Activated naive CD4-positive, alpha-beta T cell treated with anti-CD3 and anti-CD28 coated beads for 36 hours (primary cell): ENCODE measurements at regions of chr5 and their contacts with region 1.

Region 1: GRCh38 chr5:43066799-43067741 is 27.0 kb upstream of the ANXA2R start:
- DNase-seq: peak; percentile 92
- H3K4me3 Mint-ChIP-seq: peak overlapping the region; percentile 98
- H3K27ac Mint-ChIP-seq: peak overlapping the region; percentile 98
- H3K4me1 Mint-ChIP-seq: peaks cover 36% of the 10 kb centered on the region
- H3K27me3 Mint-ChIP-seq: no peaks in the 10 kb centered on the region

Region 2: GRCh38 chr5:42908509-42909488 is 158.3 kb before region 1 on chr5:
- CTCF ChIA-PET with region 1: interaction called, 5 read pairs
- intact Hi-C with region 1: loop called (anchors 1 kb)
- DNase-seq: peak; percentile 94
- H3K4me3 Mint-ChIP-seq: peak overlapping the region; percentile 92
- H3K27ac Mint-ChIP-seq: peak overlapping the region; percentile 75
- H3K4me1 Mint-ChIP-seq: peaks cover 10% of the 10 kb centered on the region
- H3K27me3 Mint-ChIP-seq: peaks cover 10% of the 10 kb centered on the region

Region 3: GRCh38 chr5:43008369-43009153 is 58.5 kb before region 1 on chr5:
- CTCF ChIA-PET with region 1: interaction called, 5 read pairs
- intact Hi-C with region 1: loop called (anchors 1 kb)
- DNase-seq: peak; percentile 93
- H3K4me3 Mint-ChIP-seq: peak overlapping the region; percentile 79
- H3K27ac Mint-ChIP-seq: peak overlapping the region; percentile 97
- H3K4me1 Mint-ChIP-seq: peaks cover 24% of the 10 kb centered on the region
- H3K27me3 Mint-ChIP-seq: no peaks in the 10 kb centered on the region

Region 4: GRCh38 chr5:43105369-43106289 is 38.6 kb after region 1 on chr5:
- CTCF ChIA-PET with region 1: interaction called, 6 read pairs
- intact Hi-C with region 1: loop called (anchors 1 kb)
- DNase-seq: peak; percentile 92
- H3K4me3 Mint-ChIP-seq: peak overlapping the region; percentile 81
- H3K27ac Mint-ChIP-seq: peak overlapping the region; percentile 87
- H3K4me1 Mint-ChIP-seq: peaks cover 42% of the 10 kb centered on the region
- H3K27me3 Mint-ChIP-seq: no peaks in the 10 kb centered on the region

Region 5: DNA sequence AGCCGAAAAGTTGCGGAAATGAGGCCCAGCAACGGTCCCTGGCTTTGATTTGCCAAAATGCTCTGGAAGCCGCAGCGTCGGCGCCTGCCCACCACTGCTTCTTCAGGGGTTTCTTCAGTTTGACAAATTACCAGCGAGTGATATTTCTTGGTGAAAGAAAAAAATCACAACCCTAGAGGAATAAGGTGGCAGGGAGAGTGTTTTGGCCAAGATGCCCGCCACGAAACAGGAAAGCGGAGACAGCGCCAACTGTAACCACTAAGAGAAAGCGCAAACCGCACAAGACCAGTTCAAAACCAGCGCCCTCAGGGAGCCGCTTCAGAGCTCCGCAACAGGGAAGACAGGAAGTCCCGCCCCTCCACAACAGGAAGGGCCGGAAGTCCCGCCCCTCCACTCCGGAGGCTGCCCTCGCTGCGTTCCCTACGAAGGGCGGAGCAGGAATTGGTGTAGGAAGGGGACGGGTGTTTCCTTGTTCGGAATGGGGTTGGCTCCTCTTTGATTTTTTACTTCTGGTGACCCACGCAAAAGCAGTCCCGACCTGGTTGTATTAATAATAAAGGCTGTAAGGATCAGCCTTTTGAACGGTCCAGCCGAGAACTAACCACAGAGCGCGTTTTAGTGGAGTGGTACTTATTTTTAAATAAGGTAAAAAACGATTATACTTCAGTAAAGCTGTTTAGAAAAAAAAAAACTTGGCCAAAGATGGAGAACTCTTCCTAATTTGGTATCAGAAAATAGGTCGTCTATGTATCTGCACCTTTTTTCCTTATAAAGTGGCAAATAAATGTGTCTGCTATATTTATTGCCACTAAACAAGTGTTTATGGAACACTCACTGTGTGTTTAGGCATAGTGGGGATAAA is 448.0 kb after region 1 on chr5 and contains the start of gene C5orf34:
- CTCF ChIA-PET with region 1: no interaction called
- intact Hi-C with region 1: loop called (anchors 1 kb)
- DNase-seq: peak; percentile 98
- H3K4me3 Mint-ChIP-seq: peak within 1 kb of the TSS; percentile 94
- H3K27ac Mint-ChIP-seq: peak within 1 kb of the TSS; percentile 99
- H3K4me1 Mint-ChIP-seq: peaks cover 25% of the 10 kb centered on the region
- H3K27me3 Mint-ChIP-seq: no peaks in the 10 kb centered on the region
- total RNA-seq, gene C5orf34: 14.7 to 16.3 TPM

Region 6: GRCh38 chr5:43772764-43773477 is 705.9 kb after region 1 on chr5:
- CTCF ChIA-PET with region 1: no interaction called
- intact Hi-C with region 1: loop called (anchors 10 kb)
- DNase-seq: no peak
- H3K4me3 Mint-ChIP-seq: no peak overlapping the region
- H3K27ac Mint-ChIP-seq: peak overlapping the region; percentile 82
- H3K4me1 Mint-ChIP-seq: peaks cover 21% of the 10 kb centered on the region
- H3K27me3 Mint-ChIP-seq: no peaks in the 10 kb centered on the region